ENCODE measurements at regions of chr19 and their contacts with region 1.

Region 1: DNA sequence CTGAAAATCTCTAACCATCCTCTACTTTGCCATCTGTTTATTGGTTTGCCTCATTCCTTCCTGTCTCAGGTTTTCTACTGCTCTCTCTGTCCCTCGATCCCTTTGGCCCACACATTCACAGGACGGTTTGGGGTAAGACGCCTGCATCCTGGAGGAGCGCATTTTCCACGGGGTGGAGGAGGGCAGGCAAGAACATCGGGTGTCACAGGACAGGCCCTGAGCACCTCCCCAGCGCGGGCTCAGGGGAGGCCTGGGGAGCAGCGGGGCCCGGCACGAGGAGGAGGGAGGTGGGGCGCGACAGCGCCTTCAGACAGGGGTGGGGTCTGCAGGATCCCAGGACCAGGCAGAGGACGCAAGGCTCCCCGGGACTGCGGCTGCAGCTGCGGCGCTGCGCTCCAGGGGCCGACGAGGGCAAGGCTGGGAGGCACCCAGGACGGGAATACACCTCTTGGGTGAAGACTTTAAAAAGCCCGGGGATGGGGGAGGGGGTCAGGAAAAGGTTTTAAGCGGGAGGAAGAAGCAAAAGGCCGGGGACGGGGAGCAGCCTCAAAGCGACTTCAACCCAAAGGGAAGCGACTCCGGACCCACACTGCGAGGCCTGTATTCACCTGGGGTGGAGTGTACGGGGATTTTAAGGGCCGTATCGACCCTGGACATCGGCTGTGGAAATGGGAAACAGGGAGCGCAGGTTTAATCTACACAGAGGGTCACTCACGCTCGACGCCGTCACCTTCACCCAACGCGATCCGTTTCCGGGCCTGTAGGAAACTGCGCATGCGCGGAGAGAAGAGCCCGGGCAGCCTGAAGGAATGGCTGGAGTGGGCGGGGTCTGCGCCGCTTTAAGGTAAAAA is at the start of gene ZNF415:
- DNase-seq: peak; percentile 64
- H3K4me3 ChIP-seq: peak within 1 kb of the TSS; percentile 38 to 58 (median 40)
- H3K27ac ChIP-seq: no peak within 1 kb of the TSS
- H3K4me1 ChIP-seq: peaks cover 5% of the 10 kb centered on the region
- H3K27me3 ChIP-seq: no peaks in the 10 kb centered on the region
- CTCF ChIP-seq: no peak
- total RNA-seq, gene ZNF415: 2.0 to 10.2 TPM

Region 2: DNA sequence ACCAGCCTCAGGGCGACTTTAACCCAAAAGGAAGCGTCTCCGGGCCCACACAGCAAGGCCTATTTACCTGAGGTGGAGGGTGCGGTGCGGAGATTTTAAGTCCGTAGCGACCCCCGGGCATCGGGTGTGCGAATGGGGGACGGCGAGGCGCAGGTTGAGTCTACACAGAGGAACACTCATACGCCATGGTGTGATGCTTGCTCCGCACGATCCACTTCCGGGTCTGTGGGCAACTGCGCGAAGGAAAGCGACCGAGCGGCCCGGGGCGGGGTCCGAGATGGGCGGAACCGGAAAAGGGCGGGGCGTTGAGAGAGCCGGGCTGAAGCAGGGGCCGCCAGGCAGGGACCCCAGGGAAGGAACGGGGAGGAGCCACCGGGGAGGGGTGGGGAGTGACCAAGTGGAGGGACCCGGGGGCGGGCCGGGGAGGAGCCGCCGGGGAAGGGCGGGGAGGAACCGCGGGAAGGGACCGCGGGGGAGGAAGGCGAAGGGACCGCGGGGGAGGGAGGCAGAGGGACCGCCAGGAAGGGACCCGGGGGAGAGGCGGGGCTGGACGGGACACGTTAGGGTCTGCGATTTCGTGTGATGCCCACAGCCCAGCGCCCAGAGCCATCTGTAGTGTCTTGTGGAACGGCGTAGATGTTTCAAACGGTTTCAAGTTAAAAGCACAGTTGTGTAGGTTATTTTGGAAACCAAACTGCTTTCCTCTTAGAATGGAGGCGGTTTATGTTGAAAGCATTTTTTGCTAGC is 29.0 kb before region 1 on chr19 and contains the start of gene ZNF160:
- CTCF ChIA-PET with region 1: no interaction called
- dilution Hi-C with region 1: no loop called
- in situ Hi-C with region 1: no loop called
- intact Hi-C with region 1: loop called (anchors 2 kb)
- DNase-seq: peak; percentile 94
- H3K4me3 ChIP-seq: peak within 1 kb of the TSS; percentile 69 to 100 (median 98)
- H3K27ac ChIP-seq: peak within 1 kb of the TSS; percentile 82
- H3K4me1 ChIP-seq: peaks cover 12% of the 10 kb centered on the region
- H3K27me3 ChIP-seq: no peaks in the 10 kb centered on the region
- CTCF ChIP-seq: no peak
- total RNA-seq, gene ZNF160: 23.4 to 33.0 TPM

Region 3: GRCh38 chr19:53158119-53158656 is 25.8 kb after region 1 on chr19:
- CTCF ChIA-PET with region 1: no interaction called
- dilution Hi-C with region 1: no loop called
- in situ Hi-C with region 1: no loop called
- intact Hi-C with region 1: no loop called
- DNase-seq: peak; percentile 38
- H3K4me3 ChIP-seq: peak overlapping the region; percentile 58 to 64 (median 62)
- H3K27ac ChIP-seq: no peak overlapping the region
- H3K4me1 ChIP-seq: no peaks in the 10 kb centered on the region
- H3K27me3 ChIP-seq: no peaks in the 10 kb centered on the region
- CTCF ChIP-seq: no peak

Measured in mammary epithelial cell (primary cell).